Caco-2 (cell line): ENCODE measurements at regions of chr2 and their contacts with region 1.

Region 1: DNA sequence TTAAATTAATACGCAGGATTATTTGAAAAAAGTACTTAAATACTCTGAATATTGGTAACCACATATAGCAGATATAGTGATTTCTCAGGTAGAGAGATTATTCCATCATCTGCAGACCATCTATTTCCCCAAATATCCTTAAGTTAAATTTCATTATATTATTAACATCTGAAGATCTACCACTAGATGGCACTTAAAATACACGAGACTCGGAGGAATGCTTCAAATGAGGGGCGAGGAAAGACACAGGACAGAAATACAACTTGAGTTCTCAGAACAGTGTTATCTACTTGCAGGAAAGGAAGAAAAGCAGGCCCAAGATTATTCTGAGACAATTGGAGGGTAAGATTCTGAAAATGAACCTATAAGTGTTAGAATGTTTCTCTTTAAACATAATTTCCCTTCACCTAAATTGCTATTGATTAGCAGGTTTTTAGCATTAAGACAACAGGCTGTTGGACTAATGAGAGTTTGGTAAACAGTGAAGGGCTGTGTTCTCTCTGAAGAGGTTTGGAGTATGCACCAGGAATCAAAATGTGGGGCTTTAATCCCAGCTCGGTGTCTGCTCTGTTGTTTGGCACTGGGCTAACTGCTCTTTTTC is 76.9 kb upstream of the GCFC2 start:
- DNase-seq: peak in 1 of 2 experiments; percentile 43
- H3K4me3 ChIP-seq: no peak overlapping the region
- H3K4me3 Mint-ChIP-seq: no peak overlapping the region
- H3K27ac Mint-ChIP-seq: peak overlapping the region; percentile 75
- H3K4me1 ChIP-seq: peaks cover 17% of the 10 kb centered on the region
- H3K4me1 Mint-ChIP-seq: peaks cover 7% of the 10 kb centered on the region
- H3K27me3 ChIP-seq: no peaks in the 10 kb centered on the region
- H3K27me3 Mint-ChIP-seq: no peaks in the 10 kb centered on the region
- CTCF ChIP-seq: peak; percentile 51 to 54

Region 2: GRCh38 chr2:75894170-75894569 is 106.5 kb after region 1 on chr2:
- CTCF ChIA-PET with region 1: no interaction called
- POLR2A ChIA-PET with region 1: no interaction called
- intact Hi-C with region 1: loop called (anchors 2 kb)
- DNase-seq: peak in 1 of 2 experiments; percentile 74
- H3K4me3 ChIP-seq: no peak overlapping the region
- H3K4me3 Mint-ChIP-seq: no peak overlapping the region
- H3K27ac Mint-ChIP-seq: peak overlapping the region; percentile 64
- H3K4me1 ChIP-seq: peaks cover 23% of the 10 kb centered on the region
- H3K4me1 Mint-ChIP-seq: peaks cover 26% of the 10 kb centered on the region
- H3K27me3 ChIP-seq: no peaks in the 10 kb centered on the region
- H3K27me3 Mint-ChIP-seq: no peaks in the 10 kb centered on the region
- CTCF ChIP-seq: no peak

Region 3: DNA sequence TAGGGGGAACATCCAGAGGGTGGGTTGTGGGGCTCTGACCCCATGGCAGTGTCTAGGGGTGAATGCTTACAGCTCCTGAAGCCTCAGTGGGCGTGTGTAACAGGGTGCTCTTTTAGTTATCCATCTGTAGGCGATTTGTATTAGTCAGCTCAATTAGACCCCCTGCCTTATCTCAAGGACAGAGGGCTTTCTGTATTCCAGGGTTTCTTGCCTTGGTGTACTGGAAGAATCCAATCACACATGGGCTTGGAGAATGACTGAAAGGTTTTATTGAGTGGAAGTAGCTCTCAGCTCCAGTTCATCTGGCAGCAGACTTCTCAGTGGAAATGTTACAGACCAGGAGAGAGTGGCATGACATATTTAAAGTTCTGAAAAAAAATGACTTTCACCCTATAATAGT is 257.1 kb after region 1 on chr2:
- CTCF ChIA-PET with region 1: no interaction called
- POLR2A ChIA-PET with region 1: no interaction called
- intact Hi-C with region 1: loop called (anchors 5 kb)
- DNase-seq: no peak
- H3K4me3 ChIP-seq: no peak overlapping the region
- H3K4me3 Mint-ChIP-seq: no peak overlapping the region
- H3K27ac Mint-ChIP-seq: no peak overlapping the region
- H3K4me1 ChIP-seq: no peaks in the 10 kb centered on the region
- H3K4me1 Mint-ChIP-seq: no peaks in the 10 kb centered on the region
- H3K27me3 ChIP-seq: no peaks in the 10 kb centered on the region
- H3K27me3 Mint-ChIP-seq: no peaks in the 10 kb centered on the region
- CTCF ChIP-seq: no peak

Region 4: DNA sequence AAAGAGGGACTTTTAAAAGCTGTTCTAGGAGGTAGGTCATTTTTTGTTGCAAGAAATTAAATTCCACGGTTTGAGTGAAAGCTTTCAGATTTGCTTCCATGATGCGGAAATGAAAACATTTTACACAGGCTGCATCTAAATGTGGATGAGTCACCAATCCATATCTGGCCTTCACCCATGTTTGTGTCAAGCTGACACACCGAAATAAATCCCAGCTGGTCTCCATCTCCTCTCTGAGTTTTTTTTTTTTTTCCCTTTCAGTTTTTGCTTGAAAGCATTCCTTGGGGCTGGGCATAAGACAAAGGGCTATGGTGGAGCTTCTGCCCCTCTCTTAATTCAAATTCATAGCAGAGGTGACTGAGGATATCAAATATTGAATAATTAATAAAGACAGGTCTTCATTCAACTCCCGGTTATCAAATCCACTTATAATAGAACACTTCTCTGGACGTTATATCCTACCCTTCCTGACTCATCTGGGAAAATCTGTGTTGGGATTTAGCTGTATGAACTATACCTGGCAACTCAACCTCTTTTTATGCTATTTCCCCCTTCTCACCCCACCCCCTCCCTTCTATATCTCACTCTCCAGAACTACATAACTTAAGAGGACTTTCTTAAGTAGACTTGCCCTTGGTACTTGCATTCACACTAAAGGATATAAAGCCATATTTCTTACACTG is 481.4 kb after region 1 on chr2:
- CTCF ChIA-PET with region 1: no interaction called
- POLR2A ChIA-PET with region 1: no interaction called
- intact Hi-C with region 1: loop called (anchors 10 kb)
- DNase-seq: no peak
- H3K4me3 ChIP-seq: no peak overlapping the region
- H3K4me3 Mint-ChIP-seq: no peak overlapping the region
- H3K27ac Mint-ChIP-seq: no peak overlapping the region
- H3K4me1 ChIP-seq: peaks cover 9% of the 10 kb centered on the region
- H3K4me1 Mint-ChIP-seq: peaks cover 10% of the 10 kb centered on the region
- H3K27me3 ChIP-seq: no peaks in the 10 kb centered on the region
- H3K27me3 Mint-ChIP-seq: no peaks in the 10 kb centered on the region
- CTCF ChIP-seq: no peak

Region 5: GRCh38 chr2:76599732-76600368 is 812.2 kb after region 1 on chr2:
- CTCF ChIA-PET with region 1: interaction called, 3 read pairs
- POLR2A ChIA-PET with region 1: no interaction called
- intact Hi-C with region 1: loop called (anchors 1 kb)
- DNase-seq: peak; percentile 82 to 85
- H3K4me3 ChIP-seq: no peak overlapping the region
- H3K4me3 Mint-ChIP-seq: no peak overlapping the region
- H3K27ac Mint-ChIP-seq: no peak overlapping the region
- H3K4me1 ChIP-seq: no peaks in the 10 kb centered on the region
- H3K4me1 Mint-ChIP-seq: no peaks in the 10 kb centered on the region
- H3K27me3 ChIP-seq: no peaks in the 10 kb centered on the region; the same call in 1 of the 2 replicates
- H3K27me3 Mint-ChIP-seq: peaks cover 4% of the 10 kb centered on the region
- CTCF ChIP-seq: peak; percentile 74 to 89